Ovary (tissue), 10 donors: ENCODE measurements at regions of chr1 and their contacts with region 1.

Region 1: GRCh38 chr1:234621657-234622335 is 11.8 kb upstream of the IRF2BP2 start:
- DNase-seq: no peak
- H3K4me3 ChIP-seq: no peak overlapping the region
- H3K27ac ChIP-seq: no peak overlapping the region
- H3K4me1 ChIP-seq: peaks cover 9% of the 10 kb centered on the region
- H3K27me3 ChIP-seq: no peaks in the 10 kb centered on the region
- CTCF ChIP-seq: no peak
- EP300 ChIP-seq: no peak
- POLR2A ChIP-seq: no peak

Region 2: DNA sequence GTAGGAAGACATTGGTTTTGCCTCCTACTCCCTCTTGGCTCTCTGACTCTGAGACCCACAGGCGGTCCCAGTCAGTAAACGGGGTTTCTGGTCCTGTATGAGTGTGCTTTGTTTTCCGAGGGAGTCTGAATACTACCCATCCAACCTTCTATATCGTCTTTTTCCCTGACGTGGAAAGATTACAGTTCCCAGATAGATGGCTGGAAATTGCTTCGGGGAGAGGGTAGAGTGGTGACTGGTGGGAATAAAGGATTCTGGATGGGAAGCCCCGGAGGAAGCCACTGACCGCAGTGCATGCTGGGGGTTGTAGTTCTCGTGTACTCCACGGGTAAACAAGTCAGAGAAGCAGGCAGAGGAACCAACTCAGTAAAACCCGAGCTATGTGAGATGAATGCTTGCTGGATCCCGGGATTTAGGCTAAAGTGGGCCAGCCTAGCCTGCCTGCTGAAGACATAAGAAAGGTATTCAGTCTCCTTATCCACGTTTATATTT is 54.4 kb after region 1 on chr1:
- intact Hi-C with region 1: loop called in 1 of 4 experiments (anchors 10 kb)
- DNase-seq: peak; percentile 77 to 88 (median 86)
- H3K4me3 ChIP-seq: peak overlapping the region; percentile 32
- H3K27ac ChIP-seq: no peak overlapping the region
- H3K4me1 ChIP-seq: peaks cover 1% of the 10 kb centered on the region
- H3K27me3 ChIP-seq: no peaks in the 10 kb centered on the region
- CTCF ChIP-seq: no peak
- EP300 ChIP-seq: no peak
- POLR2A ChIP-seq: no peak